ENCODE measurements at regions of chr5 and their contacts with region 1.

Region 1: GRCh38 chr5:123209502-123210012 is 120.5 kb downstream of the PRDM6 start:
- DNase-seq: no peak
- H3K4me3 ChIP-seq: no peak overlapping the region
- H3K27ac ChIP-seq: peak overlapping the region; percentile 75 to 90
- H3K4me1 ChIP-seq: peaks cover 7 to 27% of the 10 kb centered on the region in 2 donors
- H3K27me3 ChIP-seq: no peaks in the 10 kb centered on the region
- CTCF ChIP-seq: no peak

Region 2: DNA sequence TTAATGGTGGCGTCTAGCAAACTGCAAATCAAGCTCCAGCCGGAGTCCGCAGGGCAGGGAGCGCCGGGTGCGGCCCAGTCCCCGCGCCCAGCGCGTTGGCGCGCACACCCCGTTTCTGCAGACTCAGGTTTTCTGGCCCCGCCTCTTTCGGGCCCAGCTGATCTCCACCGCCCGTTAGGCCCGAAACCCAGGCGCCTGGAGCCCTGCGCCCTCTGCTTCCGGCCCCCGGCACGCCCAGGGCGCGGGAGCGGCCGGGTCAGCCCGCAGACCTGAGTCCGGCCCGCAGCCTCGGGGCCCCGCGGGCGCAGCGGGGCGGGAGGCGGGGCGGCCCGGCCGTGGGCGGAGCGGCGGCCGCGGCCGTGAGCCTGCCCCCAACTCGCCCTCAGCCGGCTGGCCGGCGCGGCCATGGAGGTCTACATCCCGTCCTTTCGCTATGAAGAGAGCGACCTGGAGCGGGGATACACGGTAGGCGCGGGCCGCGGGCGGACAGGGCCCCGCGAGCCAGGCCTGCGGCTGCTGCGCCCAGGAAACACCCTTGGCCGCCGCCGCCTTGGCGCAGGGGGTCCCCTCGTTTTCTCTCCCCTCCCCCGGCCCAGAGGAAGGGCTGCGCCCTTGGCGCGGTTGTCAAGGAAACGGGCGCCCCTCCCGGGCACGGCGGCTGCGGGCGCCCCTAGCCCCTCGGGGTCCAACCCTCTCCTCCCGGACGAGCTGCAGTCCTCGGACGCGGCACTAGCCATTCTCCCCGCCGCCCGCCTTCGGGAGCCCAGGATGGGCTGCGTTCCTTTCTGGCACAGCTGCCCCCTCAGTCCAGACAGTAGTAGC is 364.1 kb before region 1 on chr5 and contains the start of gene SNX24:
- intact Hi-C with region 1: no loop called
- DNase-seq: peak; percentile 55 to 90
- H3K4me3 ChIP-seq: peak within 1 kb of the TSS; percentile 77 to 96
- H3K27ac ChIP-seq: peak within 1 kb of the TSS; percentile 90 to 91
- H3K4me1 ChIP-seq: peaks cover 8 to 15% of the 10 kb centered on the region in 2 donors
- H3K27me3 ChIP-seq: no peaks in the 10 kb centered on the region
- CTCF ChIP-seq: no peak
- total RNA-seq, gene SNX24: 21.1 TPM

Region 3: GRCh38 chr5:123107343-123108244 is 102.0 kb before region 1 on chr5:
- intact Hi-C with region 1: no loop called
- DNase-seq: no peak
- H3K4me3 ChIP-seq: peak overlapping the region in 1 of 2 donors; percentile 19
- H3K27ac ChIP-seq: peak overlapping the region; percentile 44 to 99
- H3K4me1 ChIP-seq: peaks cover 0 to 22% of the 10 kb centered on the region in 2 donors
- H3K27me3 ChIP-seq: no peaks in the 10 kb centered on the region
- CTCF ChIP-seq: no peak

Region 4: GRCh38 chr5:123119334-123119986 is 90.1 kb before region 1 on chr5:
- intact Hi-C with region 1: loop called (anchors 5 kb)
- DNase-seq: no peak
- H3K4me3 ChIP-seq: peak overlapping the region in 1 of 2 donors; percentile 23
- H3K27ac ChIP-seq: peak overlapping the region; percentile 84 to 90
- H3K4me1 ChIP-seq: peaks cover 3 to 69% of the 10 kb centered on the region in 2 donors
- H3K27me3 ChIP-seq: no peaks in the 10 kb centered on the region
- CTCF ChIP-seq: peak in 1 of 3 experiments; percentile 48

Region 5: DNA sequence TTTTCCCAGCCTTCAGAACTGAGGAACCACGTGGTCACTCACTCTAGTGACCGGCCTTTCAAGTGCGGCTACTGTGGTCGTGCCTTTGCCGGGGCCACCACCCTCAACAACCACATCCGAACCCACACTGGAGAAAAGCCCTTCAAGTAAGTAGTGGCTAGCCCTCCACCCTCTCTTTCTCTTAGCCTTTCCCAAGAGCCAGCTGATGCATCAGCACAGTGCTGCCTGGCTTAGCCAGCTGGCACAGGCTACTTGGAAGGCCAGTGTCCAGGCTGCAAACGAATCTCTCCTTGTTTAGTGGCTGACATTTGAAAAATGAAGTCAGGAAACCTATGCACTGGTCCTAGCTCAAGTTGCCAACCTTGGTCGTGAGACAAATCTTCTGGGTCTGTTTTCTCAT is 29.4 kb before region 1 on chr5:
- intact Hi-C with region 1: loop called (anchors 2 kb)
- DNase-seq: peak; percentile 37 to 89
- H3K4me3 ChIP-seq: no peak overlapping the region
- H3K27ac ChIP-seq: peak overlapping the region; percentile 81 to 91
- H3K4me1 ChIP-seq: peaks cover 6 to 60% of the 10 kb centered on the region in 2 donors
- H3K27me3 ChIP-seq: no peaks in the 10 kb centered on the region
- CTCF ChIP-seq: no peak

Region 6: DNA sequence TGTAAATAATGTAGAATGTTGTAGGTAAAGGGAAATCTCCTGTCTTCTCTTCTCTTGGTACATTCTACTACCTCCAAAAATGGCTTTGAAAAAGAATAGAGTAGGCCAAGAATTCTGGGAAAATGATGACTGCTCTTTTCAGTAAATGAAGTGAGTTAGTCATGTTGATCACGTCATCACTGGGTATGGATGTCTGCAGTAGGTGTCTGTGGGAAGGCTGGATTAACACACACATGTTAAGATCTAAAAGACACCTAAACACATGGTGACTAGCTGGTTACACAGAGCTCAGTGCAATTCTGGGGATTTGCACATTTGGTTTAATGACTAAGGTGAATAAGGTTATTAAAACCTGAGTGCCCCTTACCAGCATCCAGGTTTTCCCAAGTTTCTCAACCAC is 52.2 kb after region 1 on chr5:
- intact Hi-C with region 1: loop called (anchors 2 kb)
- DNase-seq: no peak
- H3K4me3 ChIP-seq: no peak overlapping the region
- H3K27ac ChIP-seq: peak overlapping the region; percentile 66 to 74
- H3K4me1 ChIP-seq: peaks cover 8 to 21% of the 10 kb centered on the region in 2 donors
- H3K27me3 ChIP-seq: no peaks in the 10 kb centered on the region
- CTCF ChIP-seq: no peak

Region 7: GRCh38 chr5:123273984-123274383 is 64.4 kb after region 1 on chr5:
- intact Hi-C with region 1: loop called (anchors 5 kb)
- DNase-seq: no peak
- H3K4me3 ChIP-seq: no peak overlapping the region
- H3K27ac ChIP-seq: peak overlapping the region; percentile 1 to 45
- H3K4me1 ChIP-seq: peaks cover 0 to 31% of the 10 kb centered on the region in 2 donors
- H3K27me3 ChIP-seq: no peaks in the 10 kb centered on the region
- CTCF ChIP-seq: peak in 2 of 3 experiments; percentile 14 to 37